BJ (cell line): ENCODE measurements at regions of chr11 and their contacts with region 1.

Region 1: DNA sequence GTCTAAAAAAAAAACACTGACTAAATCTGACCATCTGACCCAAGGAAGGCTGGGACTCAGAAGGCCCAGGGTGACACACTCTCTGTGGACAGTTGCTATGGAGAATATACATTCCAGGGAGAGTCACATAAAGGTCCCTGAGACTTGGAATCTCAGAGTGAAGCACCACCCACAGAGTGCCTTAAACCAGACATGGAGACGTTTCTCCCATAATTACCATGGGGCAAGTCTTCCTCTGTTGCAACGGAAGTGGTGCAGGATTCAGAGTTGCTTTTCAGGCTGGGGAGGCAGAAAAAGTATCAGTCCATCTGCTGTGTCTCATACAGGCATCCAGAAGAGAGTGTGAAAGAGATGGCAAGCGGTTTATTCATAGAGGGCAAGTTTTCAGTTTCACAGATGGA is 58.7 kb upstream of the SLN start:
- DNase-seq: peak; percentile 16
- H3K4me3 ChIP-seq: no peak overlapping the region
- H3K27me3 ChIP-seq: no peaks in the 10 kb centered on the region; the same call in 1 of the 2 replicates
- CTCF ChIP-seq: no peak

Region 2: GRCh38 chr11:107549253-107549953 is 221.1 kb before region 1 on chr11:
- CTCF ChIA-PET with region 1: interaction called, 14 read pairs
- POLR2A ChIA-PET with region 1: no interaction called
- DNase-seq: no peak
- H3K4me3 ChIP-seq: no peak overlapping the region
- H3K27me3 ChIP-seq: no peaks in the 10 kb centered on the region
- CTCF ChIP-seq: peak; percentile 81

Region 3: GRCh38 chr11:107565219-107565937 is 205.2 kb before region 1 on chr11 and contains the start of gene ALKBH8:
- CTCF ChIA-PET with region 1: interaction called, 21 read pairs
- POLR2A ChIA-PET with region 1: no interaction called
- DNase-seq: no peak
- H3K4me3 ChIP-seq: peak within 1 kb of the TSS; percentile 87
- H3K27me3 ChIP-seq: peaks cover 3% of the 10 kb centered on the region; the same call in 1 of the 2 replicates
- CTCF ChIP-seq: 0 out of 2 replicates have a peak, but pooled peaks have one; percentile 1
- polyA plus RNA-seq, gene ALKBH8: 2.9 and 5.6 TPM in 2 replicates

Region 4: GRCh38 chr11:107573438-107573837 is 197.1 kb before region 1 on chr11:
- CTCF ChIA-PET with region 1: interaction called, 17 read pairs
- POLR2A ChIA-PET with region 1: no interaction called
- DNase-seq: no peak
- H3K4me3 ChIP-seq: no peak overlapping the region
- H3K27me3 ChIP-seq: peaks cover 5% of the 10 kb centered on the region
- CTCF ChIP-seq: no peak

Region 5: GRCh38 chr11:108008656-108009496 is 238.3 kb after region 1 on chr11 and contains the start of gene CUL5:
- CTCF ChIA-PET with region 1: no interaction called
- POLR2A ChIA-PET with region 1: no interaction called
- DNase-seq: peak; percentile 72
- H3K4me3 ChIP-seq: peak within 1 kb of the TSS; percentile 88
- H3K27me3 ChIP-seq: no peaks in the 10 kb centered on the region
- CTCF ChIP-seq: peak; percentile 92
- polyA plus RNA-seq, gene CUL5: 16.8 and 20.8 TPM in 2 replicates